ENCODE measurements at regions of chr10 and their contacts with region 1.

Region 1: GRCh38 chr10:77926566-77927401 is at the start of gene DLG5:
- DNase-seq: peak in 1 of 2 experiments; percentile 68
- H3K4me3 ChIP-seq: peak within 1 kb of the TSS; percentile 59 to 83 (median 80)
- H3K27ac ChIP-seq: peak within 1 kb of the TSS; percentile 79; the same call in 1 of the 2 replicates
- H3K4me1 ChIP-seq: peaks cover 5 to 19% (median 8%) of the 10 kb centered on the region in 4 experiments
- H3K27me3 ChIP-seq: peaks cover 0 to 4% (median 2%) of the 10 kb centered on the region in 4 experiments; a peak in 1 of 7 replicates
- CTCF ChIP-seq: no peak
- EP300 ChIP-seq: no peak
- POLR2A ChIP-seq: no peak
- RAD21 ChIP-seq: peak in 1 of 2 experiments; percentile 5; a peak in 1 of 4 replicates
- total RNA-seq, gene DLG5: 71.4 and 71.8 TPM in 2 replicates

Region 2: GRCh38 chr10:77907900-77908717 is 18.7 kb before region 1 on chr10:
- CTCF ChIA-PET with region 1: interaction called, 21 read pairs
- POLR2A ChIA-PET with region 1: interaction called, 19 read pairs
- DNase-seq: no peak
- H3K4me3 ChIP-seq: no peak overlapping the region
- H3K27ac ChIP-seq: no peak overlapping the region
- H3K4me1 ChIP-seq: peaks cover 0 to 6% (median 4%) of the 10 kb centered on the region in 4 experiments; a peak in 5 of 7 replicates
- H3K27me3 ChIP-seq: no peaks in the 10 kb centered on the region
- CTCF ChIP-seq: peak; percentile 82 to 93 (median 84)
- EP300 ChIP-seq: no peak
- POLR2A ChIP-seq: no peak
- RAD21 ChIP-seq: peak; percentile 73 to 82

Region 3: DNA sequence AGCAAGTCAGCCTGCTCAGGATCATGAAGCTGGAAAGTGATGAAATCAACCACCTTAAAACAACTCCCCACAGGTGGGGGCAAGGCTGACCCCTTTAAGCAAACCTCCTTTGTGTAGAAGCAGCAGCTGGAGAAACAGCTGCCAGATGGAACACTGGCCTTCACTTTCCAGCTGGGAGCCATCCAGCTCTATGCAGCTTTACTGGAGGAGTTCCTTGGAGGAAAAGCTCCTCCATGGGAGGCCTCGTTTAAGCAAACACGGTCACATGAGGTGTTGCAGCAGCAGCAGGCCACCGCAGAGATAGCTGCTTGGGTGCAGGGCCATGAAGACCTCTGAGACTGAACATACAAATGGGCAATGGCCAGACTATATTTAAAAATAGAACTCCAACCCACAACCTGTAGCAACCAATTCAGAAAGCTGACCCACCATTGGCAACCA is 12.8 kb after region 1 on chr10:
- CTCF ChIA-PET with region 1: interaction called, 10 read pairs
- POLR2A ChIA-PET with region 1: interaction called, 16 read pairs
- DNase-seq: no peak
- H3K4me3 ChIP-seq: no peak overlapping the region
- H3K27ac ChIP-seq: no peak overlapping the region
- H3K4me1 ChIP-seq: peaks cover 0 to 8% (median 2%) of the 10 kb centered on the region in 4 experiments; a peak in 4 of 7 replicates
- H3K27me3 ChIP-seq: no peaks in the 10 kb centered on the region
- CTCF ChIP-seq: no peak
- EP300 ChIP-seq: no peak
- POLR2A ChIP-seq: no peak
- RAD21 ChIP-seq: no peak

Measured in H1 (cell line).